ENCODE measurements at regions of chr7 and their contacts with region 1.

Region 1: GRCh38 chr7:66974986-66975590 is 20.3 kb downstream of the SBDS start:
- H3K4me3 Mint-ChIP-seq: no peak overlapping the region
- H3K27ac Mint-ChIP-seq: no peak overlapping the region
- H3K4me1 Mint-ChIP-seq: no peaks in the 10 kb centered on the region
- H3K27me3 Mint-ChIP-seq: no peaks in the 10 kb centered on the region

Region 2: GRCh38 chr7:66920769-66921395 is 54.2 kb before region 1 on chr7 and contains the start of gene TMEM248:
- intact Hi-C with region 1: loop called (anchors 10 kb)
- H3K4me3 Mint-ChIP-seq: peak within 1 kb of the TSS; percentile 91
- H3K27ac Mint-ChIP-seq: peak within 1 kb of the TSS; percentile 80
- H3K4me1 Mint-ChIP-seq: peaks cover 31% of the 10 kb centered on the region
- H3K27me3 Mint-ChIP-seq: no peaks in the 10 kb centered on the region